Activated B cell treated with CpG ODN at 0.5 μM for 24 hours (primary cell): ENCODE measurements at regions of chr14 and their contacts with region 1.

Region 1: GRCh38 chr14:22505697-22506377 is 83.2 kb downstream of the DAD1 start:
- DNase-seq: no peak
- ATAC-seq: peak; percentile 29
- H3K4me3 Mint-ChIP-seq: peak overlapping the region; percentile 49
- H3K27ac Mint-ChIP-seq: peak overlapping the region; percentile 90
- H3K4me1 Mint-ChIP-seq: peaks cover 70% of the 10 kb centered on the region
- H3K27me3 Mint-ChIP-seq: no peaks in the 10 kb centered on the region
- CTCF ChIP-seq: no peak

Region 2: GRCh38 chr14:21525962-21526671 is 979.7 kb before region 1 on chr14 and contains the start of gene SALL2:
- CTCF ChIA-PET with region 1: no interaction called
- POLR2A ChIA-PET with region 1: no interaction called
- intact Hi-C with region 1: no loop called
- DNase-seq: no peak
- ATAC-seq: peak; percentile 64
- H3K4me3 Mint-ChIP-seq: peak within 1 kb of the TSS; percentile 85
- H3K27ac Mint-ChIP-seq: no peak within 1 kb of the TSS
- H3K4me1 Mint-ChIP-seq: peaks cover 10% of the 10 kb centered on the region
- H3K27me3 Mint-ChIP-seq: peaks cover 12% of the 10 kb centered on the region
- CTCF ChIP-seq: no peak
- total RNA-seq, gene SALL2: 0.24 and 0.37 TPM in 2 replicates

Region 3: DNA sequence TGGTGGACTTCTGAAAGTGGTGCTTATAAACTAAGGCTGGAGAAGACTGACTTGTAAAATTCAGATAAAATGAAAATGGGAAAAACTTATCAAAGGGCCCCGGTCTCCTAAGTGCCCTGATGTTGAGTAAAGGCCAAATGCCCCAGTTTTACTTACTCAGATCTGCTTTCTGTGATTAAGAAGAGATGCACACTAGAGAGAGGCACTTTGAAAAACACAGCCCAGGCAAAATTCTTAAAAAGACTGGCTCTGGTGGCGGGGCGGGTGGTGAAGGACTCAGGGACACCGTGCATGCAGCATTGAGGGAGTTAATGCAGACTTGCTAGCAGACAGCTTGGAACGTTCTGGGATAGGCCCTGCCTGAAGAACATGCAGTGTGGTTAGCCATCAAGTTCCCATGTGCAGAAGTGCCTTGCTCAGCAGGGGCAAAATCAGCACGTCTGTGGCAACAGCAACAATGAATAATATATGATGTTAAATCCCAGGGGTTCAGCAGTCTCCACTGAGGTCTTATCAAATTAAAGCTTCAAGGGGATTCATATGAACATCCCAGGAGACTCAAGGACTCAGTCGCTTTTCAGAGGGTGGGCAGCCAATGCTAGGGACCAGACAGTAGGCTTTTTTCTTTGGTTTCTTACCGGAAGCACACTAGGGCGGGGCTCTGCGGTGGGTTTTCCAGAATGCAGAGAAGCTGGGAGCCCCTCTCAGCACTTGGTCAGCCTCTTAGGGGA is 21.8 kb before region 1 on chr14:
- CTCF ChIA-PET with region 1: no interaction called
- POLR2A ChIA-PET with region 1: interaction called, 100 read pairs
- intact Hi-C with region 1: no loop called
- DNase-seq: no peak
- ATAC-seq: peak; percentile 59
- H3K4me3 Mint-ChIP-seq: peak overlapping the region; percentile 73
- H3K27ac Mint-ChIP-seq: peak overlapping the region; percentile 85
- H3K4me1 Mint-ChIP-seq: peaks cover 97% of the 10 kb centered on the region
- H3K27me3 Mint-ChIP-seq: no peaks in the 10 kb centered on the region
- CTCF ChIP-seq: no peak

Region 4: GRCh38 chr14:22491683-22492621 is 13.9 kb before region 1 on chr14:
- CTCF ChIA-PET with region 1: interaction called, 5 read pairs
- POLR2A ChIA-PET with region 1: interaction called, 100 read pairs
- intact Hi-C with region 1: loop called (anchors 1 kb)
- DNase-seq: no peak
- ATAC-seq: peak; percentile 37
- H3K4me3 Mint-ChIP-seq: peak overlapping the region; percentile 42
- H3K27ac Mint-ChIP-seq: peak overlapping the region; percentile 88
- H3K4me1 Mint-ChIP-seq: peaks cover 98% of the 10 kb centered on the region
- H3K27me3 Mint-ChIP-seq: no peaks in the 10 kb centered on the region
- CTCF ChIP-seq: no peak

Region 5: DNA sequence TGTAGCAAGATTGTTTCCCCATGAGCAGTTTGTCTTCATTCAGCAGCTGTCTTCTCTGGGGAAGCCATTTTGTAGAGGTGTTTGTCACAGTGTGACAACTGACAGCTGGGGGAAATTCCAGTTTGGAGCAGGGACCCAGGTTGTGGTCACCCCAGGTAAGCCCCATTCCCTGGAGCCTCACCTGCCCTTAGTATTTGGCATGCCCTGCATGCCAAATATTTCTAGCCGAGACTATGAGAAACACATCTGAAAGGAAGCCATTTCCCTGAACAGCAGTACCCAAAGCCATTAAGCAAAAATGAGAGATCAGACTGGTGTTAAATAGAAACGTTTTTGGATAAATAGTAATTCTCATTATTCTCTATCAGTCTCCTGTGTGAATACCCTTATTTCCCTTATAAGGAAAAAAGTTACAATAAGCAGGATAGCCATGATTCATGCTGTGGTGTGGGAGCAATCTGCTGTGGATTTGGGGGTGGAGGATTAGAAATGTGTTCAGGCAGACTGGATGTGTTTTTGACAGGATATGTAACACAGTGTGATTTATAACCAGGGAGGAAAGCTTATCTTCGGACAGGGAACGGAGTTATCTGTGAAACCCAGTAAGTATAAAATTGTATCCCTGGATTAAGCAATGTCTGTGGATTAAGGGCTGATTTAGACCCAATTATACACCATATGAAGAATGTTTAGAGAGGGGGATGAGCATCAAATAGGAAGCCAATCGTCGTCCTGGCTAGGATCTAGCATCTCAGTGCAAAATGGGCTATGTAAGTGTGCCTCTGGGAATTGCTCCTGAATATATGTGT is 14.2 kb after region 1 on chr14:
- CTCF ChIA-PET with region 1: interaction called, 7 read pairs
- POLR2A ChIA-PET with region 1: interaction called, 27 read pairs
- intact Hi-C with region 1: loop called (anchors 1 kb)
- DNase-seq: no peak
- ATAC-seq: no peak
- H3K4me3 Mint-ChIP-seq: peak overlapping the region; percentile 52
- H3K27ac Mint-ChIP-seq: peak overlapping the region; percentile 88
- H3K4me1 Mint-ChIP-seq: peaks cover 94% of the 10 kb centered on the region
- H3K27me3 Mint-ChIP-seq: no peaks in the 10 kb centered on the region
- CTCF ChIP-seq: no peak

Region 6: DNA sequence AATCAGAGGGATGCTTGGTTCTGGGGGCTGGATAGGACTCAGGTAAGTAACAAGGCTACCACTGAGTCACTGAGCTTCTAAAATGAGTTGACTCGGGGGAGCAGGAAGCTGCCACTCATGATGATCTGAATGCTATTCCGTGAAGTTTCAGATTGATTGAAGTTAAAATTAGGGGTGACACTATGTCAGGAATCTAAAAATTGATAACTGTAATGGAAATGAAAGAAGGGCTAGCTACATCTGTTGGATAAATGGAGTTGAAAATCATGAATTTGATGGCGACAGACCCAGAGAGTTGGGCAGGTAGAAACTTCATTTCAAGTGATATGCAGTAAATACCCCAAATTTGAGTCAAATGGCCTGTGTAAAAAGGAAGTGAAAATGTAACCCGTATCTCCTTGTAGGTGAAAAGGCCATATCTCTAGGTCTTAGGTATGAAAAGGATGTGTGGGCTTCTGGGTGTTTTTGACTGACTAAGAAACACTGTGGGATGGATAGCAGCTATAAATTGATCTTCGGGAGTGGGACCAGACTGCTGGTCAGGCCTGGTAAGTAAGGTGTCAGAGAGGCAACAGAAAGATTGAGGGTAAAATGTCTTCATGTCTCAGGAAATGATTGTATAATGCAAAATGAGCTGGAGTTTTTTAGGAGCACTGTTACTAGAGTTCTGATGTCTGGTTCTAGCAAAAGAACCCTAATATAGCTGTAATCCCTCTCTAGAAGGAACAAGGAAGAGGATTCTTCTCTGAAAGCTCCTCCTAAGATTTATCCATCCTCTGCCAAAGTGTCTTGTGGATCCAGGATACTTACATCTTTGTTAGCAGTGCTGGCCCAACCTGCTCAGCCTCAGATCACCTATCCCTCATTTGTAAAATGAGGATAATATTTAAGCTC is 25.9 kb after region 1 on chr14:
- CTCF ChIA-PET with region 1: no interaction called
- POLR2A ChIA-PET with region 1: interaction called, 55 read pairs
- intact Hi-C with region 1: loop called (anchors 1 kb)
- DNase-seq: no peak
- ATAC-seq: peak; percentile 79
- H3K4me3 Mint-ChIP-seq: peak overlapping the region; percentile 80
- H3K27ac Mint-ChIP-seq: peak overlapping the region; percentile 93
- H3K4me1 Mint-ChIP-seq: peaks cover 76% of the 10 kb centered on the region
- H3K27me3 Mint-ChIP-seq: no peaks in the 10 kb centered on the region
- CTCF ChIP-seq: no peak

Region 7: GRCh38 chr14:22536853-22537338 is 31.1 kb after region 1 on chr14:
- CTCF ChIA-PET with region 1: no interaction called
- POLR2A ChIA-PET with region 1: interaction called, 55 read pairs
- intact Hi-C with region 1: loop called (anchors 1 kb)
- DNase-seq: no peak
- ATAC-seq: peak; percentile 98
- H3K4me3 Mint-ChIP-seq: peak overlapping the region; percentile 63
- H3K27ac Mint-ChIP-seq: peak overlapping the region; percentile 86
- H3K4me1 Mint-ChIP-seq: peaks cover 84% of the 10 kb centered on the region
- H3K27me3 Mint-ChIP-seq: no peaks in the 10 kb centered on the region
- CTCF ChIP-seq: no peak